PC-3 (cell line): ENCODE measurements at regions of chr1 and their contacts with region 1.

Region 1: GRCh38 chr1:106957783-106958182 is 98.7 kb upstream of the PRMT6 start:
- DNase-seq: peak; percentile 24
- ATAC-seq: no peak
- H3K4me3 ChIP-seq: no peak overlapping the region
- H3K27ac ChIP-seq: no peak overlapping the region
- H3K4me1 ChIP-seq: 0 out of 2 replicates have a peak, but pooled peaks cover 7% of the 10 kb centered on the region
- H3K27me3 ChIP-seq: no peaks in the 10 kb centered on the region
- CTCF ChIP-seq: peak; percentile 56

Region 2: DNA sequence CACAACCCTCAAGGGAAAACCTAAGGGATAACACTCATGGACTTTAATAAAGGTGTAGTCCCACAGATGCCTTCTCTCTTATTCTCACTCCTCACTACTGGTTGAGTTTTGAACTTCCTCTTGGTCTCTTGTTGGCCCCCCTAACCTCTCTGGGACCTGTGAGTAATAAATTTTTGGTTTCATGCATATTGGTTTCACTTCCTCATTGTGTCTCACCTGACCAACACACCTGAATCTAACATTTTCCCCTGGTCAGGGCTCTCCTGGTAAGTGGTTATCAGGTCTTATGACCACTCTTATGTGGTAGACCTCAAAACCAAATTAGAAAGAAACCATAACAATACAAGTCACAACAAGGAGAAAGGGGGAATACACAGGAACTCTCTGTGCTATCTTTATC is 38.2 kb after region 1 on chr1:
- CTCF ChIA-PET with region 1: no interaction called
- POLR2A ChIA-PET with region 1: no interaction called
- intact Hi-C with region 1: no loop called
- DNase-seq: no peak
- ATAC-seq: no peak
- H3K4me3 ChIP-seq: no peak overlapping the region
- H3K27ac ChIP-seq: no peak overlapping the region
- H3K4me1 ChIP-seq: no peaks in the 10 kb centered on the region
- H3K27me3 ChIP-seq: no peaks in the 10 kb centered on the region
- CTCF ChIP-seq: no peak

Region 3: DNA sequence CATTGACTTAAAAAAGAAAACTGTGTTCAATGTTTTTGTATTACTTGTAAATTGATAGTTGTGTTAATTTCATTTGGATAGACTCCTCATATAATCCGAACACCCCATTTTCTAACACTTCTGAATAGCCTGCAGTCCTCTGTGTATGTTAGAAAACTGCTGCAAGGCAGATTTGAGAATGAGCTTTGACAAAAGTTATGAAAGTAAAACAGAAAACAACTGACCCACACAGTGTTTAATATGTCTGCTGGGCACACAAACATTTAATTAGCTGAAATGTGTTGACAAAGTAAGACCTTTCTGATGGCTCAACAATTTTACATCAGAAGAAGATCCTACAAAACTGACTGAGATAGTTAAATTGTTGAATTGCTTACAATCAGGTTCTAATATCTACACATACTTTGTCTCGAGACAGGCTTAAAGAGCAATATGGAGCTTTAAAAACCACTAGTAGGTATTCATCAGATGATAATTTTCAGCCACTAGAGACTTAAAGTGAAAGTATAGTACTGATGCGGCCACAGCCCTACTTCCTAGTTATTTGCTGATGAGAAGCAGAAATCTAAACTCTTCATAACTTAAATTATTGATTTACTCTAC is 58.7 kb after region 1 on chr1:
- CTCF ChIA-PET with region 1: no interaction called
- POLR2A ChIA-PET with region 1: no interaction called
- intact Hi-C with region 1: loop called (anchors 10 kb)
- DNase-seq: no peak
- ATAC-seq: no peak
- H3K4me3 ChIP-seq: no peak overlapping the region
- H3K27ac ChIP-seq: no peak overlapping the region
- H3K4me1 ChIP-seq: peaks cover 9% of the 10 kb centered on the region
- H3K27me3 ChIP-seq: no peaks in the 10 kb centered on the region
- CTCF ChIP-seq: no peak